ENCODE measurements at regions of chr9 and their contacts with region 1.

Region 1: GRCh38 chr9:109574068-109574882 is 76.2 kb upstream of the PTPN3 start:
- DNase-seq: no peak
- H3K4me3 ChIP-seq: no peak overlapping the region
- H3K27ac ChIP-seq: no peak overlapping the region
- H3K4me1 ChIP-seq: no peaks in the 10 kb centered on the region
- H3K27me3 ChIP-seq: no peaks in the 10 kb centered on the region
- CTCF ChIP-seq: peak; percentile 38 to 64 (median 60)
- EP300 ChIP-seq: no peak
- POLR2A ChIP-seq: no peak

Region 2: DNA sequence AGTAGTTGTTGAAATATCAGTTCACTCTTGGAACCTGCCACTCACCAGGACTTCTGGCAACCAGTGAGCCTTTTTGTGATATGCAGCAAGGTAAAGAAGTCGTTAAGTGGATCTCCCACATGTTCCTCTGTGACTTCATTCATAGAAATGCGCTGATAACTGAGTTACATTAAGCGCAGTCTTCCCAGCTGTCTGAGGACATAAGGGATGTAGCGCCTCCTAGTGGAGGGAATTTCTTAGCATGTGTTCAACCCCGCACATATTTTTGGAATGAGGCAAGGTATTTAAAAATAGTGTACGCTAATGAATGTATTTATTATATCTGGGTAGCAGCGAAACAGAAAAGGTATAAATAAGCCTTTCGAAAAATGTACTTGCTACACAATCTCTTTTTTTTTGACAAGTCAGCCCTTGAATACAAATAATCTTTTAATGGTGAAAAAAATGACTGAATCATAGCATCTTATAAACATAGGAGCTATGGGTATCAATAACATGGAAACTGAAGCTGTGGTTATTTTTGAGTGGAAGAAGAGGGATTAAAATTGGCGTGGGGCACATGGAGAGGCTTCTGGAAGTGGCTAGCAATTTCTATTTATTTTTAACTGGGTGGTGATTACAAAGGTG is 243.7 kb after region 1 on chr9:
- intact Hi-C with region 1: loop called (anchors 1 kb)
- DNase-seq: peak; percentile 86
- H3K4me3 ChIP-seq: no peak overlapping the region
- H3K27ac ChIP-seq: peak overlapping the region in 1 of 4 donors; percentile 49
- H3K4me1 ChIP-seq: peaks cover 0 to 15% (median 7%) of the 10 kb centered on the region in 4 donors
- H3K27me3 ChIP-seq: no peaks in the 10 kb centered on the region
- CTCF ChIP-seq: peak; percentile 82 to 88 (median 84)
- EP300 ChIP-seq: peak in 1 of 4 donors; percentile 21
- POLR2A ChIP-seq: no peak

Region 3: DNA sequence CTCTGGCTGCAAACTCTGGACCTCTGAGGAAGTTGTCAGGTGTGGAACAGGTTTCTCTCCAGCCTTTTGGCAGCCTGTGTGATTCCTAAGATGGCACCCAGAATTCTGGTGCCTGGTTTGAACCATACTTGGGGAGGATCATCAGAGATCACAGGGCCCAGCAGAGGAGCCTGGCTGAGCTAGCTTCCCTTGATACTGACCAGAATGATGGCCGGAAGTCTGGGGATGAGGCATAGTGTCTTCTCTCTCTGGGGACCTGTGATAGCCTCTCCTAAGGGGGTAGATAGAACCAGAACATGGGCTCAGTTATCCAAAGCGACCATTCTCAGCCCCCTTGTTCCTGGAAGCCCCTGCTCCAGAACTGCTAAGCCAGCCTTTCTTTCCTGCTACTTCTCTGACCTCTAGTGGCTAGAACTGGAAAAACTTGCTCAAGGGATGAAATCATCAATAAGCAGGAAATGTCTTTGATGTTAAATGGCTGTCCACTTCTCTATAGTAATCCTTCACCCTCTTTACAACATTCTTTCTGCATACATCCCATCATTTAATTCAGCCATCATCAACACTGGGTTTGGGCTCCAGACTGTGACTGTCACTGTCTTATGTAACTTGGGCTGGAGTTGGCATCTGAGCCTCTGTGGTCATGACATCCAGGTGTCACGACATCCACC is 578.6 kb after region 1 on chr9:
- intact Hi-C with region 1: loop called (anchors 5 kb)
- DNase-seq: no peak
- H3K4me3 ChIP-seq: no peak overlapping the region
- H3K27ac ChIP-seq: peak overlapping the region in 2 of 4 donors; percentile 27 to 34
- H3K4me1 ChIP-seq: peaks cover 0 to 70% (median 44%) of the 10 kb centered on the region in 4 donors
- H3K27me3 ChIP-seq: no peaks in the 10 kb centered on the region
- CTCF ChIP-seq: peak; percentile 53 to 87 (median 70)
- EP300 ChIP-seq: no peak
- POLR2A ChIP-seq: no peak